ENCODE measurements at regions of chrX and their contacts with region 1.

Region 1: DNA sequence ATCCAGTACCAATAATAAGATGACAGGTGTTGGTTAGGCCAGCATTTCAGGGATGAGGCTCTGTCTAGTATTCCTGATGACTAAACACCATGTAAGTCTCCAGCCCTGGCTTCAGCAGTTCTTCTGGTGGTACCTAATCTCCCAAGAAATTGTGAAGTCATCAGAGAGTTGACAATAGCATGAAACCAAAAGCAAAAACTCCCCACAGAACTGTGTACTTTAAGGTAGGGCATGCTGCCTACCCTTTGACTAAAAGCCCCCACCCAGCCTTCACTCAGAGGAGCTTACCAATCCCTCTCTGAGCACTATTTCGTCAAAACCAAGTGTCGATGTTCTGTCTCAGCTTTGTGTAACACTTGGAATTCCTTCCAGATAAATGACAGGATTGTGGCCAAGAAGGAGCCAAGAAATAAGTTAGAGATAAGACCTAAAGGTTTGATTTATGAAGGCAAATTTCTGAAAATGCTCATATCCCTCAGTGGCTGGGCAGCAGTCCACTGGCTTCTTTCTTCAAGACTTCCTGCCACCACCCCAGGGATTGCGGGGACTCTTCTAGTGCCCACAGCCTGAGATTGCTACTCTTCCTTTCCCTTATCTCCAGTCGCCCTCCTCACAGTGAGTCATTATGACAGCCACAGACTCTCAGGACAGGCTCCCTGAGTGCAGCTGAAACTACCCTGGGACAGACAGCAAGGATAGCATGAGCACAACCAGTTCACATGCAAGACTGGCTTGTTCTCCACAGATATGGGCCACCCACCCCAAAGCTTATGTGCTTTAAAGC is 67.3 kb upstream of the LHFPL1 start:
- DNase-seq: no peak
- H3K4me3 ChIP-seq: no peak overlapping the region
- H3K27ac ChIP-seq: no peak overlapping the region
- H3K4me1 ChIP-seq: no peaks in the 10 kb centered on the region
- H3K27me3 ChIP-seq: peaks cover 13% of the 10 kb centered on the region
- CTCF ChIP-seq: no peak
- EP300 ChIP-seq: no peak
- RAD21 ChIP-seq: no peak

Region 2: GRCh38 chrX:112731793-112732575 is 15.0 kb before region 1 on chrX:
- CTCF ChIA-PET with region 1: interaction called, 16 read pairs
- POLR2A ChIA-PET with region 1: no interaction called
- DNase-seq: no peak
- H3K4me3 ChIP-seq: no peak overlapping the region
- H3K27ac ChIP-seq: no peak overlapping the region
- H3K4me1 ChIP-seq: no peaks in the 10 kb centered on the region
- H3K27me3 ChIP-seq: no peaks in the 10 kb centered on the region
- CTCF ChIP-seq: peak; percentile 59
- EP300 ChIP-seq: no peak
- RAD21 ChIP-seq: peak; percentile 42; the same call in 1 of the 2 replicates

Region 3: GRCh38 chrX:113212052-113212451 is 465.0 kb after region 1 on chrX:
- CTCF ChIA-PET with region 1: no interaction called
- POLR2A ChIA-PET with region 1: no interaction called
- DNase-seq: no peak
- H3K4me3 ChIP-seq: no peak overlapping the region
- H3K27ac ChIP-seq: no peak overlapping the region
- H3K4me1 ChIP-seq: no peaks in the 10 kb centered on the region
- H3K27me3 ChIP-seq: no peaks in the 10 kb centered on the region
- CTCF ChIP-seq: no peak
- EP300 ChIP-seq: no peak
- RAD21 ChIP-seq: no peak

Measured in SK-N-SH (cell line).